Activated naive CD4-positive, alpha-beta T cell treated with anti-CD3 and anti-CD28 coated beads for 36 hours (primary cell): ENCODE measurements at regions of chr22 and their contacts with region 1.

Region 1: DNA sequence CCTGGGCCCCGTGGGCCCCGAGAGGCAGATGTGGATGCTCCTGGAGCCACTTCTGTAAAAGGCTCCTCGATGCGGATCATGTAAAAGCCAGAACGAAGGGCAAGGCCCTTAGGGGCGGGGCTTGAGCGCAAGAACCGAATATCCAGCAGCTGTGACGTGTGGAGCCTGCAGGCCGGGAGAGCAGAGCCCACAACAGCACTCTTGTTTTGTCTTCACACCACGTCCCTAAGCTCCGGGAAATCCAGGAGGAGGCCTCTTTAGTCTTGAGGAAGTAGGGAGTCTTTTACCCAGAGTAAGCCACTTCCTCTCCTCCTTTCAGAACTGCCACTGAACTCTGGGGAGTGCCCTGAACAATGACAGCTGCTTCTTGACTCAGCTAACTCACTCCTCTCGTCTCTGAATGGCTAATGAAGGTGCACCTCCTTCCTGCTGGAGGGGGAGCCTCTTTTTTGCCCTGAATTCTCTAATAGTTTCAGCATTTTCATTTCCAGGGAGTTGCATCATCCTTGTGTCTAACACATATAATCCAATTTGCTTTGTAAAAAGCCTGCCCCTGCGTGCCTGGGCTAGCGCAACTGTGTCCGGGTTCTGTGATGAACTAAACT is 12.5 kb downstream of the L3MBTL2 start:
- DNase-seq: peak; percentile 84
- H3K4me3 Mint-ChIP-seq: peak overlapping the region; percentile 63
- H3K27ac Mint-ChIP-seq: peak overlapping the region; percentile 90
- H3K4me1 Mint-ChIP-seq: peaks cover 28% of the 10 kb centered on the region
- H3K27me3 Mint-ChIP-seq: no peaks in the 10 kb centered on the region

Region 2: DNA sequence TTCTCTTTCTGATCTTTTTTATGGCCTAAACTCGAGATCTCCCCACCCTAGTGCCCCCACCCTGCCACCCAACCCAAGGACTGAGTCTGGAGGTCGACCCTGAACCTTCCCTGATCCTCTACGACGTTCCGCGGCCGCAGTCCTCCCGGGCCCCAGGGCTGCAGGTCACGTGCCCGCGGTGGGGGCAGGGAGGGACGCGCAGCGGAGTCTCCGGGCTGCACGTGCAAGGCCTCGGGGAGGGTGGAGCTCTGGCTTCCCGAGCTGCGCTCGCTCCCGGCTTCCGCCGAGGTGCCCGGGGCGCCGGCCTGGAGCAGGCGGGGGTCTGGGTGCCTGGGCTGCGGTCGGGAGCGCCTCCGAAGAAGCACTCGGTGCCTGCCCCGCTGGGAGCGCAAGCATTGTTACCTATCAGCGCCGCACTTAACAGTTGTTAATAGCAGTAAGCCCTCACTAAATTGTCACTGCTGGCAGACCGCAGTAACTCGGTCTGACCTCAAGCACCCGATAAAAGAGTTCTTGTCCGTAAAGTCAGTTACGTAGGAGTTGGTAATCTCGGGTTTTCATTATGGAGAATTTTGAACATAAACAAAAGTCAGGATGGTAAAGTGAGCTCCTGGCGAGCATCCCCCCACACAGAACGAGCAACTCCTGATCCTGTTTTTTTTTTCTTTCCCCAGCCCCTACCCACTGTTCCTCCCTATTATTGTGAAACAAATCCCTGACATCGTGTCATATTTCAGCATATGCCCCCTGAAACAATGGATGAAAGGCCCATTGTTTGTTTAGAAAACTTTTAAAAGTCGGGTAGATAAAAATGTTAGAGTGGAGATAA is 195.0 kb before region 1 on chr22:
- CTCF ChIA-PET with region 1: no interaction called
- intact Hi-C with region 1: loop called (anchors 1 kb)
- DNase-seq: peak; percentile 88
- H3K4me3 Mint-ChIP-seq: peak overlapping the region; percentile 80
- H3K27ac Mint-ChIP-seq: peak overlapping the region; percentile 61
- H3K4me1 Mint-ChIP-seq: peaks cover 16% of the 10 kb centered on the region
- H3K27me3 Mint-ChIP-seq: no peaks in the 10 kb centered on the region

Region 3: DNA sequence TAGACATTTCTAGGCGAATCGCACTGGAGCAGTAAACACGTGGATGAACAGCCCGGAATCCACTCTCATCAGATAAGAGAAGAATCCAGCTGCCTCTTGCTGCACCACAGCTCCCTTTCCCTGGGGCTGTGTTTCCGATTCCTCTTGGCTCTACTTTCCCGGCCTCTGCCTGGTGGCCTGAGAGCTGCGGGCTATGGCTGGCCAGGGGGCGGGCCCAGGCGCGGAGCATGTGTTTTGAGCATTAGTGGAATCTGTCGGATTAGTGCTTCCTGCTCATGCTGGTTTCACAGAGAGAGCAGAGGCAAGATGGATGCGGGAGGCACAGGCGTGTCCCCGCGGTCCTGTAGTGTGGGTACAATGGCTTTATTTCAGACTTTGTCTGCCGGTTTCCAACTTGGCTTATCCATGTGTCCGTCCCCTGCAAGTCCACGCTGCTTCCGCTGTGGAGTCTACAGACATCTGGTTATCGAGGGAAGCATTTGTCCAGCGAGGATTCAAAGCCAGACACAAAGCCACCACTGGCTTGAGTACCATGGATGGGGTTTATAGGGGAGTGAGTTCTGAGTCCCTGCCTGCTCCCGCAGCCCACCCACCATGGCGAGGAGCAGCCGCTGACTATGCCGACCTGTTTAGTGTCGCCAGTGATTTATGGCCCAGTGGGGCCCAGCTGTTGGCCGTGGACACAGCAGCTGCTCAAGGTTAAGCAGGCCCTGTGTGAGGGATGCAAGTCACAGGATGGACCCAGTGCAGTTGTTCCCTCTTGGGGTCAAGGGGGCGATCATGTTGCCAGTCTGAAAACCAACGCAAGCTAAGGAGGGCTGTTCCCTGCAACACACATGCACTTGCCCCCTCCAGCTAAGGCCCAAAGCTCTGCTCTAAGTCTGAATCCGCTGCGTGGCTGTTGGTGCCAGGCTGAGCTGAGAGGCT is 168.6 kb before region 1 on chr22:
- CTCF ChIA-PET with region 1: no interaction called
- intact Hi-C with region 1: no loop called
- DNase-seq: peak; percentile 9
- H3K4me3 Mint-ChIP-seq: no peak overlapping the region
- H3K27ac Mint-ChIP-seq: no peak overlapping the region
- H3K4me1 Mint-ChIP-seq: peaks cover 5% of the 10 kb centered on the region
- H3K27me3 Mint-ChIP-seq: no peaks in the 10 kb centered on the region

Region 4: DNA sequence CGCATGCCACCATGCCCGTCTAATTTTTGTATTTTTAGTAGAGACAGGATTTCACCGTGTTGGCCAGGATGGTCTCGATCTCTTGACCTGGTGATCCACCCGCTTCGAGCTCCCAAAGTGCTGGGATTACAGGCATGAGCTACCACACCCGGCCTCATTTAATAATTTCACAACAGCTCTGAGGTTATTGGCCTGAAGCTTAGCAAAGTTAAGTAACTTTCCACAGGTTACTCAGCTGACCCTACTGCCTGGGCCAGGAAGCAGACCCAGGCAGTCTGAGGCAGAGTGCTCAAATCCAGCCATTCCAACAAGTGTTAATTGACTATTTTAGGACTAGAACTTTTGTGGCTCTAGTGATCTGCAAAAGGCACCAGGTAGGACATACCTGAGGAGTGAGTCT is 64.8 kb before region 1 on chr22:
- CTCF ChIA-PET with region 1: no interaction called
- intact Hi-C with region 1: no loop called
- DNase-seq: no peak
- H3K4me3 Mint-ChIP-seq: no peak overlapping the region
- H3K27ac Mint-ChIP-seq: no peak overlapping the region
- H3K4me1 Mint-ChIP-seq: peaks cover 4% of the 10 kb centered on the region
- H3K27me3 Mint-ChIP-seq: no peaks in the 10 kb centered on the region

Region 5: DNA sequence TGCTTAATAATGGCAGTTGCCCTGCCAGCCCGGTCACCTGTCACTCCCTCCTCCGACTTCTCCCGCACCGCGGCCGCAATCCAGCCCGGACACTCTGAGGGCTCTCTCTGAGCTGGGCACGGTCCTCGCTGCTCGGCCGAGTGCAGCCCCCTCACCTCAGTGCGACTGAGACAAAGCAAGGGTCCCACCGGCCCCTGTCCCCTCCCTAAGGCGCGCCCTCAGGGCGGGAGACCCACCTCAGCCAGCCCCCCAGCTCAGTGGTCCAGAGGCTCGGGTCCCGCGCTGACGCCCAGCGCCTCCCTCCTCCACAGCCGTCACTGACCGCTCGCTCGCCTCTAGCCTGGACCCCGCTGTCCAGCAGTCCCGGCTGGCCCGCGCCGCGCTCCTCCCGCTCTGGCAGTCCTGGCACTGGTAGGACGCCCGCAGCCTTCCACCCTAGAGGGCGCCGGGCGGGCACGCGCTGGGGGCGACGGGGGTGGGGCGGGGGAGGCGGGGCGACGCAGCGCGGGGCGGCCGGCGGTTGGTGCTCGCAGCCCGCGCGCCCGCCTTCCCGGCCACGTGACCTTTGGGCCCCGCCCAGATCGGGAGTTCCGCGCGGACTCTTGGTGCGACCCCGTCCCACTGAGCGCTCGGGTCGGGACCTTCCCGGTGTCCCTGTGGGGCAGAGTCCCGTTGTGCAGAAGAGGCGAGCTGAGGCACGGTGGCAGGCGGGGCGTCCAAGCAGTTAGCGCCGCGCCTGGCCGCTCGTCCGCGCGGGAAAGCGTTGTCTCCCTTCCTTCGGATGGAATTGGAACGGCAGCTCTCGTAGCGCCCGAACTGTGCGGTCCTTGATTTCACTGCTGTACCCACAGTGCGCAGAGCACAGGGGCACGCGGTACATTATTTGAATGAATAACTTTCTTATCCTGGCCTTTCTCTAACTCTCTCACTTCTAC is 20.4 kb before region 1 on chr22:
- CTCF ChIA-PET with region 1: no interaction called
- intact Hi-C with region 1: loop called (anchors 2 kb)
- DNase-seq: peak; percentile 77
- H3K4me3 Mint-ChIP-seq: peak overlapping the region; percentile 80
- H3K27ac Mint-ChIP-seq: no peak overlapping the region
- H3K4me1 Mint-ChIP-seq: peaks cover 8% of the 10 kb centered on the region
- H3K27me3 Mint-ChIP-seq: no peaks in the 10 kb centered on the region

Region 6: GRCh38 chr22:41204992-41205900 is 12.4 kb before region 1 on chr22 and contains the start of gene L3MBTL2:
- CTCF ChIA-PET with region 1: no interaction called
- intact Hi-C with region 1: loop called (anchors 1 kb)
- DNase-seq: peak; percentile 99
- H3K4me3 Mint-ChIP-seq: peak within 1 kb of the TSS; percentile 88
- H3K27ac Mint-ChIP-seq: peak within 1 kb of the TSS; percentile 86
- H3K4me1 Mint-ChIP-seq: peaks cover 33% of the 10 kb centered on the region
- H3K27me3 Mint-ChIP-seq: no peaks in the 10 kb centered on the region
- total RNA-seq, gene L3MBTL2: 19.4 to 22.3 TPM

Region 7: GRCh38 chr22:41237707-41238569 is 20.3 kb after region 1 on chr22:
- CTCF ChIA-PET with region 1: interaction called, 8 read pairs
- intact Hi-C with region 1: loop called (anchors 1 kb)
- DNase-seq: peak; percentile 91
- H3K4me3 Mint-ChIP-seq: peak overlapping the region; percentile 45
- H3K27ac Mint-ChIP-seq: no peak overlapping the region
- H3K4me1 Mint-ChIP-seq: peaks cover 9% of the 10 kb centered on the region
- H3K27me3 Mint-ChIP-seq: no peaks in the 10 kb centered on the region

Region 8: DNA sequence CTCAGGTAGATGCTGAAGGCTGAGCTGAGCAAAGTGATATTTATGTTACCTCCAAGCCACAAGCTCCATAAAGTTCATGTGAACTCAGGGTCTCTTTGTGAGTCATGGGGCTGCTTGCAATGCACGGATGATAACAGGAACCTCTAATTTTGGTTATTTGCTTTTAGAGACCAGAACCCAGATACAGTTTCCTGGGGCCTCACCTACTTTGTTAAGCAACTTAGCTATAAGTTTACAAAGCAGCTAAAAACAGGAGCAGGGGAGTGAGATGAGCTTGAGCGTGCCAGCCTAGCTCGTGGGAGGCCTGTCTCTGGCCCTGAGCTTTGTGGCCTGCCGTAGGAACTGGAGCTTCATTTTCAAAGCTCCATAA is 644.5 kb after region 1 on chr22:
- CTCF ChIA-PET with region 1: no interaction called
- intact Hi-C with region 1: no loop called
- DNase-seq: peak; percentile 76
- H3K4me3 Mint-ChIP-seq: peak overlapping the region; percentile 58
- H3K27ac Mint-ChIP-seq: peak overlapping the region; percentile 97
- H3K4me1 Mint-ChIP-seq: peaks cover 87% of the 10 kb centered on the region
- H3K27me3 Mint-ChIP-seq: no peaks in the 10 kb centered on the region